ENCODE measurements at regions of chr15 and their contacts with region 1.

Region 1: GRCh38 chr15:69160141-69160993 is at the start of gene GLCE:
- DNase-seq: peak; percentile 98
- H3K4me3 ChIP-seq: peak within 1 kb of the TSS; percentile 91 to 99 (median 96)
- H3K27ac ChIP-seq: peak within 1 kb of the TSS; percentile 78
- H3K4me1 ChIP-seq: peaks cover 46% of the 10 kb centered on the region
- H3K27me3 ChIP-seq: no peaks in the 10 kb centered on the region
- CTCF ChIP-seq: no peak
- POLR2A ChIP-seq: peak; percentile 95
- total RNA-seq, gene GLCE: 79.8 and 86.6 TPM in 2 replicates

Region 2: GRCh38 chr15:69074001-69074842 is 86.1 kb before region 1 on chr15:
- CTCF ChIA-PET with region 1: interaction called, 6 read pairs
- POLR2A ChIA-PET with region 1: interaction called, 5 read pairs
- dilution Hi-C with region 1: no loop called
- intact Hi-C with region 1: loop called (anchors 1 kb)
- DNase-seq: peak; percentile 70
- H3K4me3 ChIP-seq: peak overlapping the region; percentile 47 to 58 (median 56)
- H3K27ac ChIP-seq: peak overlapping the region; percentile 34
- H3K4me1 ChIP-seq: peaks cover 6% of the 10 kb centered on the region
- H3K27me3 ChIP-seq: no peaks in the 10 kb centered on the region
- CTCF ChIP-seq: peak in 1 of 2 donors; percentile 28
- POLR2A ChIP-seq: peak; percentile 77

Region 3: DNA sequence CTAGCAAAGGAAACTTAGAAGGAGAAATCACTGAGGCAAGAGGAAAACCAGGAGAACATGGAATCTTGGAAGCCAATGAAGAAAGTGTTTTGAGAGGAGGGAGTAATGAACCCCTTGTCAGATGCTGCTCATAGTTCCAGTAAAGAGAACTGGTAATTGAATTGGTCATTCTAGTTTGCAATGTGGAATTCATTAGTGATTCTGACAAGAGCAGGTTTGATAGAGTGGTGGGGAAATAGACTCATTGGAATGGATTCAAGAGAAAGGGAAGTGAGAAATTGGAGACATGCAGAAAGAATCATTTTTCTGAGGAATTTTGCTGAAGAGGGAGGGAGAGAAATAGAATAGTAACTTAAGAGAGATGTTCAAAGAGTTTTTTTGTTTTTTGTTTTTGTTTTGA is 21.1 kb after region 1 on chr15:
- CTCF ChIA-PET with region 1: no interaction called
- POLR2A ChIA-PET with region 1: no interaction called
- dilution Hi-C with region 1: no loop called
- intact Hi-C with region 1: no loop called
- DNase-seq: no peak
- H3K4me3 ChIP-seq: no peak overlapping the region
- H3K27ac ChIP-seq: no peak overlapping the region
- H3K4me1 ChIP-seq: no peaks in the 10 kb centered on the region
- H3K27me3 ChIP-seq: no peaks in the 10 kb centered on the region
- CTCF ChIP-seq: no peak
- POLR2A ChIP-seq: no peak

Region 4: GRCh38 chr15:69209661-69210060 is 49.3 kb after region 1 on chr15:
- CTCF ChIA-PET with region 1: no interaction called
- POLR2A ChIA-PET with region 1: no interaction called
- dilution Hi-C with region 1: no loop called
- intact Hi-C with region 1: loop called (anchors 5 kb)
- DNase-seq: no peak
- H3K4me3 ChIP-seq: no peak overlapping the region
- H3K27ac ChIP-seq: no peak overlapping the region
- H3K4me1 ChIP-seq: peaks cover 6% of the 10 kb centered on the region
- H3K27me3 ChIP-seq: no peaks in the 10 kb centered on the region
- CTCF ChIP-seq: no peak
- POLR2A ChIP-seq: no peak

Region 5: DNA sequence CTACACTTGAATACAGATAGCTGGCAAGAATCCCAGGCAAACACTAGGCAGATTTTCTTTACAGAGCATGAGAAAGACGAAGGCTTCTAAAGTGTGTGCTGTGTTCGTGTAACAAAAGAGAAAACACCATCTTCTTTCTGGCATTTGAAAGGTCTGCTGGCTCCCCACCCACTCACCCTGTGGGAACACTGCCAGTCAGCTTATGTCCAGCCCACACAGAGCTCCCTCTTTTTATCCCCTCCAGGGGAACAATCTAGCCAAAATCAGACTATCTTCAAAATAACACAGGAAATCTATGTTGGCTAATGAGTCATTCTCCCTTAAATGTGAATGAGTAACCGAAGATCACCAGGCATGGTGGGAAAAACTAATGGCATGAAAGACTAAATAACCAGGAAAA is 92.8 kb after region 1 on chr15:
- CTCF ChIA-PET with region 1: no interaction called
- POLR2A ChIA-PET with region 1: no interaction called
- dilution Hi-C with region 1: no loop called
- intact Hi-C with region 1: loop called (anchors 5 kb)
- DNase-seq: peak; percentile 89
- H3K4me3 ChIP-seq: no peak overlapping the region
- H3K27ac ChIP-seq: peak overlapping the region; percentile 29
- H3K4me1 ChIP-seq: peaks cover 19% of the 10 kb centered on the region
- H3K27me3 ChIP-seq: no peaks in the 10 kb centered on the region
- CTCF ChIP-seq: no peak
- POLR2A ChIP-seq: no peak

Region 6: DNA sequence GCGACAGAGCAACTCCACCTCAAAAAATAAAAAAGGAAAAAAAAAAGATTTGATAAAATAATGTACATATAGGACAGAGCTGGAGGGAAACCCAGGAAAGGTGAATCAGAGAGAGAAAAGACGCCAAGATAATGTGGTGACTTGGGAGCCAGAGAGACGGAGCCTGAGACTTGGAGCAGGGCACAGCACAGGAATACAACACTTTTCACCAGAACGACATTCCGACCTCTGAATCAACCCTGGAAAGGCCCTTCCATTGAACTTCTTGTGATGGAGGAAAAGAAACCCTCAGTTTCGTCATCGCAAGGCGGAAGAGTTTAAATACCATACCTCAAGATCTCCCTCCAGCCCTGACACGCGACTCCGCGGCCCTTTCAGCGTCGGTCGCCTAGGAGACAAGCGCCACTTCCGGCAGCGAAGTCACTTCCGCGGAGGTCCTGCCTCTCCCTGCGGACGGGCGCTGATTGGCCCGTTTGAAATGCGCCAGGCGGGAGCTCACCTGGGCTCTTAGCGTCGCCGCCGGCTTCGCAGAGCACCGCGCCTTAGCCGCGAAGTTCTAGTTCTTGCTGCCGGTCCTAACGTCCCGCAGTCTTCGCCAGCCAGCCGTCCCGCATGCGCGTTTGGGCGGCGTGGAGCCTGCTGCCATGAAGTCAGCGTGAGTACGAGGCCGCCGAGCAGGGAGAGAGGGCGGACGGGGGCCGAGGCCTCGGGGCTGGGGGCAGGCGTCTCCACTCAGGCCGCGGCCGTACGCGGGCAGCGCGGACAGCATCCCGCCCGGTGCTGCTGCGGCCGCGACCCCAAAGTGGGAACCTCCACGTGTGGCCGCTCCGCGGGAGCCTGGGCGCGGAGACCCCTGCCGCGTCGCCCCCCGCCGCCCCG is 253.7 kb after region 1 on chr15 and contains the start of gene KIF23:
- CTCF ChIA-PET with region 1: no interaction called
- POLR2A ChIA-PET with region 1: no interaction called
- dilution Hi-C with region 1: no loop called
- intact Hi-C with region 1: loop called (anchors 2 kb)
- DNase-seq: peak; percentile 93
- H3K4me3 ChIP-seq: peak within 1 kb of the TSS; percentile 93 to 94 (median 93)
- H3K27ac ChIP-seq: peak within 1 kb of the TSS; percentile 54
- H3K4me1 ChIP-seq: peaks cover 17% of the 10 kb centered on the region
- H3K27me3 ChIP-seq: no peaks in the 10 kb centered on the region
- CTCF ChIP-seq: no peak
- POLR2A ChIP-seq: peak; percentile 40
- total RNA-seq, gene KIF23: 55.7 and 64.7 TPM in 2 replicates

Measured in endothelial cell of umbilical vein (primary cell).